AG04450 (cell line): ENCODE measurements at regions of chr4 and their contacts with region 1.

Region 1: GRCh38 chr4:87973283-87974169 is 2.0 kb upstream of the SPP1 start:
- DNase-seq: peak; percentile 15
- H3K4me3 ChIP-seq: no peak overlapping the region
- H3K27ac ChIP-seq: peak overlapping the region; percentile 54
- H3K27me3 ChIP-seq: no peaks in the 10 kb centered on the region
- CTCF ChIP-seq: peak; percentile 84

Region 2: DNA sequence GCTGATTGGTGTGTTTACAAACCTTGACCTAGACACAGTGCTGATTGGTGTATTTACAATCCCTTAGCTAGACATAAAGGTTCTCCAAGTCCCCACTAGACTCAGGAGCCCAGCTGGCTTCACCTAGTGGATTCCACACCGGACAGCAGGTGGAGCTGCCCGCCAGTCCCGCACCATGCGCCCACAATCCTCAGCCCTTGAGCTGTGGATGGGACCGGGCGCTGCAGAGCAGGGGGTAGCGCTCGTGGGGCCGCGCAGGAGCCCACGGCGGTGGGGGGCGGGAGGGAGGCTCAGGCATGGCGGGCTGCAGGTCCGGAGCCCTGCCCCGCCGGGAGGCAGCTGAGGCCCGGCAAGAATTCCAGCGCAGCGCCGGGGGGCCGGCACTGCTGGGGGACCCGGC is 110.0 kb before region 1 on chr4:
- CTCF ChIA-PET with region 1: interaction called, 10 read pairs
- POLR2A ChIA-PET with region 1: no interaction called
- DNase-seq: no peak
- H3K4me3 ChIP-seq: no peak overlapping the region
- H3K27ac ChIP-seq: no peak overlapping the region
- H3K27me3 ChIP-seq: no peaks in the 10 kb centered on the region
- CTCF ChIP-seq: no peak

Region 3: GRCh38 chr4:87961993-87962392 is 11.5 kb before region 1 on chr4:
- CTCF ChIA-PET with region 1: interaction called, 39 read pairs
- POLR2A ChIA-PET with region 1: no interaction called
- DNase-seq: no peak
- H3K4me3 ChIP-seq: no peak overlapping the region
- H3K27ac ChIP-seq: no peak overlapping the region
- H3K27me3 ChIP-seq: peaks cover 2% of the 10 kb centered on the region
- CTCF ChIP-seq: no peak

Region 4: GRCh38 chr4:87985097-87985886 is 11.8 kb after region 1 on chr4:
- CTCF ChIA-PET with region 1: interaction called, 16 read pairs
- POLR2A ChIA-PET with region 1: no interaction called
- DNase-seq: no peak
- H3K4me3 ChIP-seq: no peak overlapping the region
- H3K27ac ChIP-seq: no peak overlapping the region
- H3K27me3 ChIP-seq: peaks cover 4% of the 10 kb centered on the region
- CTCF ChIP-seq: peak; percentile 49

Region 5: DNA sequence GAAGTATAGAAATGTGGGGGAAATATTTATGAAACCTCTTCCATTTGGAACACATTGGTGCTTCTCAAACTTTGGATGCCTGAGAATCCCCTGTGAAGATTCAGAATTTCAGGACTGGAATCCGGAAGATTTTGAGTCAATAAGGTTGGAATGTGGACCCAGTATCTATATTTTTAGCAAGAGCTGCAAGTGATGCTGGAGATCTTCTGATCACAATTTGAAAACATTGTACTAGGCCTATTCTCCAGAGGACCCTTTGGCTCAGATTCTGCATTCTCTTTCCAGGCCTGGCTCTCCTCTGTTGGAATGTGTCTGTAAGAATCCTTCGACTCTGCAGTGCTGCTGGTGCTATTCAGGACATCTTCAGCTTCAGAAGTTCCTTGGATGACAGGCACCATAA is 31.6 kb after region 1 on chr4:
- CTCF ChIA-PET with region 1: interaction called, 10 read pairs
- POLR2A ChIA-PET with region 1: no interaction called
- DNase-seq: no peak
- H3K4me3 ChIP-seq: no peak overlapping the region
- H3K27ac ChIP-seq: no peak overlapping the region
- H3K27me3 ChIP-seq: no peaks in the 10 kb centered on the region
- CTCF ChIP-seq: no peak

Region 6: GRCh38 chr4:88196013-88196365 is 222.5 kb after region 1 on chr4:
- CTCF ChIA-PET with region 1: no interaction called
- POLR2A ChIA-PET with region 1: no interaction called
- DNase-seq: no peak
- H3K4me3 ChIP-seq: no peak overlapping the region
- H3K27ac ChIP-seq: no peak overlapping the region
- H3K27me3 ChIP-seq: no peaks in the 10 kb centered on the region
- CTCF ChIP-seq: no peak